GM12878 (cell line): ENCODE measurements at regions of chr12 and their contacts with region 1.

Region 1: GRCh38 chr12:43882578-43883178 is 46.8 kb downstream of the TMEM117 start:
- DNase-seq: peak; percentile 17
- ATAC-seq: peak; percentile 90
- H3K4me3 ChIP-seq: no peak overlapping the region
- H3K27ac ChIP-seq: no peak overlapping the region
- H3K4me1 ChIP-seq: no peaks in the 10 kb centered on the region
- H3K27me3 ChIP-seq: no peaks in the 10 kb centered on the region
- CTCF ChIP-seq: peak; percentile 78 to 85 (median 85); a peak in 5 of 6 replicates
- EP300 ChIP-seq: no peak
- POLR2A ChIP-seq: no peak
- RAD21 ChIP-seq: peak; percentile 98

Region 2: DNA sequence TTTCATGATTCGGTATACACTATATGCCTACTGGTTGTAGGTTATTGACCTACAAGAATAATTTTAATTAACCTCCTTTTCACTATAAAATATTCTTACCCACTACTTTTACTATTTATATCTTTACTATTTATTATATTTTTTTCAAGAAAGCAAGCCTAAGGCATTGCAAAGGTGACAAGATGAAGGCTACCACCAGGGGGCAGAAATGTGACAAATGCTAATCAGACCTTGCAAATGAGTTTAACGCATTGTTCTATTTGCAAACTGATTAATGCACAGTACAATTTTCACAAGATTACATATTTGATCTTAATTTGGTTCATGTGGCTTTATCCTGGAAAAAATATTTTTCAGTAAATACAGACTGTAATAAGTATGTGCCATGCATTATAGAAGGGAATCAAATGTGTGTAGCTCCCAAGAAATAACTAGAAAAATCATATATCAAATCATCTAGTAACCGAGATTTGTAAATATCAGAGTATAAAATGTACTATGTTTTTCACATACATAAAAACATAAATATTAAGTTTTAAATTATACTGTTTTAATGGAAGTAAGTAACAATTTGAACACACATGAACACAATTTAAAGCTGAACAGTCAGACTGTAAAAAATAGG is 437.6 kb before region 1 on chr12:
- CTCF ChIA-PET with region 1: interaction called, 67 read pairs
- POLR2A ChIA-PET with region 1: no interaction called
- RAD21 ChIA-PET with region 1: interaction called, 22 read pairs
- SMC1A ChIA-PET with region 1: interaction called, 34 read pairs
- in situ Hi-C with region 1: loop called (anchors 5 kb)
- intact Hi-C with region 1: loop called (anchors 1 kb)
- DNase-seq: peak; percentile 4
- ATAC-seq: peak; percentile 73
- H3K4me3 ChIP-seq: no peak overlapping the region
- H3K27ac ChIP-seq: no peak overlapping the region
- H3K4me1 ChIP-seq: no peaks in the 10 kb centered on the region
- H3K27me3 ChIP-seq: no peaks in the 10 kb centered on the region
- CTCF ChIP-seq: peak; percentile 58 to 81 (median 71); a peak in 5 of 6 replicates
- EP300 ChIP-seq: no peak
- POLR2A ChIP-seq: no peak
- RAD21 ChIP-seq: peak; percentile 61

Region 3: DNA sequence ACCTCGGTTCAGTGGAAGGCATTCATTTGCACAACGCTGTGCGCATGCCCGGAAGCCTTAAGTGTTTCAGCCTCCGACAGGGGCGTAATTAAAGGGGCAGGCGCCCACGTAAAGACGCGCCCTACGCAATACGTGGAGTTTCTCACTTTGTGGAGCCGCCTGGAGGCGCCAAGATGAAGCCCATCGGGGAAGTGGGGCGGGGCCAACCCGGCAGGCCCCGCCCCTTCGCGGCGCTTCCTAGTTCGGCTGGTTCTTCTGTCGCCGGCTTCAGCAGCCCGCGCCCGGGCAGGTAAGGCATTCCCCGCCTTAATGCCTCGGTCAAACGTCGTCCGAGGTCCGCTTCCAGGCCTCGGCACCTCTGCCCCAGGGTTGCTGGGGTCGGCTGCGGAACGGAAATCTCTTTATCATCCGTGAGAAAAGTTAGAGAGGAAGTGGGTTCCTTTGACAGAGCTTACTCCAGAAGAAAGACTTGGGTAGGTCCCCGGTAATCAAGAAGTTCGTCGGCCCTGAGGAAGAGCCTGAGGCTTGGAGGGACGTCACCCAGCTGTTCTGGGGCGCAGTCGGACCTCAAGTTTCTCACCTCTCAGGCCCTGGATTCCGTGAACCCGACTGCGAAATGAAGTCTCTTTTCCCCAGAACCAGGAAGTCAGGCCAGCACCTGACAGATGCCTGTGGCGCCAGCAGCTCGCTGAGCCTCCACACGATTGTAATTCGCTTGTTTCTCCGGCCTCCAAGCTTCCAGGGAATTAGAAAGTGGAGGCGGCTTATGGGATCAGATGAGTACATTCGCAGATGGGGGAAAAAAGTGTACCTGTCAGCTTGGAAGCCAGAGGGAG is 123.7 kb before region 1 on chr12 and contains the starts of genes IRAK4 and PUS7L:
- CTCF ChIA-PET with region 1: interaction called, 27 read pairs
- POLR2A ChIA-PET with region 1: interaction called, 5 read pairs
- RAD21 ChIA-PET with region 1: interaction called, 20 read pairs
- SMC1A ChIA-PET with region 1: interaction called, 27 read pairs
- in situ Hi-C with region 1: no loop called
- intact Hi-C with region 1: no loop called
- DNase-seq: peak; percentile 87
- ATAC-seq: peak; percentile 92
- H3K4me3 ChIP-seq: peak within 1 kb of the TSS; percentile 84
- H3K27ac ChIP-seq: peak within 1 kb of the TSS; percentile 96
- H3K4me1 ChIP-seq: 0 out of 2 replicates have a peak, but pooled peaks cover 4% of the 10 kb centered on the region
- H3K27me3 ChIP-seq: no peaks in the 10 kb centered on the region
- CTCF ChIP-seq: peak; percentile 39 to 77 (median 56); a peak in 5 of 6 replicates
- EP300 ChIP-seq: no peak
- POLR2A ChIP-seq: peak; percentile 93
- RAD21 ChIP-seq: peak; percentile 43; the same call in 1 of the 2 replicates
- polyA plus RNA-seq, gene IRAK4: 7.9 to 13.8 TPM
- polyA plus RNA-seq, gene PUS7L: 9.2 to 42.1 TPM

Region 4: GRCh38 chr12:43805860-43806736 is 76.6 kb before region 1 on chr12 and contains the start of gene TWF1:
- CTCF ChIA-PET with region 1: interaction called, 16 read pairs
- POLR2A ChIA-PET with region 1: interaction called, 7 read pairs
- RAD21 ChIA-PET with region 1: interaction called, 12 read pairs
- SMC1A ChIA-PET with region 1: interaction called, 11 read pairs
- in situ Hi-C with region 1: no loop called
- intact Hi-C with region 1: loop called (anchors 2 kb)
- DNase-seq: no peak
- ATAC-seq: peak; percentile 95
- H3K4me3 ChIP-seq: peak within 1 kb of the TSS; percentile 84
- H3K27ac ChIP-seq: peak within 1 kb of the TSS; percentile 96
- H3K4me1 ChIP-seq: no peaks in the 10 kb centered on the region
- H3K27me3 ChIP-seq: no peaks in the 10 kb centered on the region
- CTCF ChIP-seq: peak in 2 of 3 experiments; percentile 18 to 30; a peak in 2 of 6 replicates
- EP300 ChIP-seq: peak in 1 of 2 experiments; percentile 9; a peak in 1 of 4 replicates
- POLR2A ChIP-seq: peak; percentile 95
- RAD21 ChIP-seq: no peak
- polyA plus RNA-seq, gene TWF1: 8.7 to 11.5 TPM

Region 5: GRCh38 chr12:43898474-43898873 is 15.8 kb after region 1 on chr12:
- CTCF ChIA-PET with region 1: interaction called, 10 read pairs
- POLR2A ChIA-PET with region 1: no interaction called
- RAD21 ChIA-PET with region 1: interaction called, 3 read pairs
- SMC1A ChIA-PET with region 1: no interaction called
- in situ Hi-C with region 1: no loop called
- intact Hi-C with region 1: no loop called
- DNase-seq: no peak
- ATAC-seq: no peak
- H3K4me3 ChIP-seq: no peak overlapping the region
- H3K27ac ChIP-seq: no peak overlapping the region
- H3K4me1 ChIP-seq: no peaks in the 10 kb centered on the region
- H3K27me3 ChIP-seq: no peaks in the 10 kb centered on the region
- CTCF ChIP-seq: no peak
- EP300 ChIP-seq: no peak
- POLR2A ChIP-seq: no peak
- RAD21 ChIP-seq: no peak